Calu3 (cell line): ENCODE measurements at regions of chr11 and their contacts with region 1.

Region 1: GRCh38 chr11:107563702-107564101 is 1.8 kb downstream of the ALKBH8 start:
- DNase-seq: peak; percentile 28
- H3K4me3 Mint-ChIP-seq: no peak overlapping the region
- H3K27ac Mint-ChIP-seq: no peak overlapping the region
- H3K4me1 Mint-ChIP-seq: peaks cover 29% of the 10 kb centered on the region
- H3K27me3 Mint-ChIP-seq: no peaks in the 10 kb centered on the region
- CTCF ChIP-seq: peak; percentile 43

Region 2: GRCh38 chr11:107770551-107770951 is 206.8 kb after region 1 on chr11:
- CTCF ChIA-PET with region 1: no interaction called
- intact Hi-C with region 1: loop called (anchors 5 kb)
- DNase-seq: no peak
- H3K4me3 Mint-ChIP-seq: no peak overlapping the region
- H3K27ac Mint-ChIP-seq: no peak overlapping the region
- H3K4me1 Mint-ChIP-seq: no peaks in the 10 kb centered on the region
- H3K27me3 Mint-ChIP-seq: peaks cover 1% of the 10 kb centered on the region
- CTCF ChIP-seq: no peak